Mammary epithelial cell (primary cell): ENCODE measurements at regions of chr21 and their contacts with region 1.

Region 1: GRCh38 chr21:34807146-34807880 is 138.5 kb downstream of the CLIC6 start:
- DNase-seq: peak; percentile 97
- H3K4me3 ChIP-seq: no peak overlapping the region
- H3K27ac ChIP-seq: peak overlapping the region; percentile 100
- H3K4me1 ChIP-seq: peaks cover 78% of the 10 kb centered on the region
- H3K27me3 ChIP-seq: no peaks in the 10 kb centered on the region
- CTCF ChIP-seq: peak in 1 of 2 donors; percentile 21

Region 2: DNA sequence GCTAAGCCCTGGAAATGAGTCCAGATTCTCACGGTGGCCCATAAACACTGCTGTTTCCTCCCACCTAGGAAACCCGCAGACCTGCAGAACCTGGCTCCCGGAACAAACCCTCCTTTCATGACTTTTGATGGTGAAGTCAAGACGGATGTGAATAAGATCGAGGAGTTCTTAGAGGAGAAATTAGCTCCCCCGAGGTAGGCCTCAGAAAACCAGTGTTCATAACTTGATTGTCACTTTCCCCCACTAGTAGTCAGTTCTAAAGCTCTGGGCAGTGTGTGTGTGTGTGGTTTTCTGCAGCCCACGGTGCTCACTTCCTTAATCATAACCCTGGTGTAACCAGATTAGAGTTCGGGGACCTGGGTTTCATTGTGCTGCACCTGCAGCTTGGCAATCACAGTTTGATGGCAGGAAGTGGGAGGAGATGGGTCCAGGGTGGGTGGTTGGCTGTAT is 99.4 kb before region 1 on chr21:
- CTCF ChIA-PET with region 1: no interaction called
- dilution Hi-C with region 1: loop called (anchors 5 kb)
- in situ Hi-C with region 1: no loop called
- intact Hi-C with region 1: no loop called
- DNase-seq: no peak
- H3K4me3 ChIP-seq: no peak overlapping the region
- H3K27ac ChIP-seq: no peak overlapping the region
- H3K4me1 ChIP-seq: peaks cover 11% of the 10 kb centered on the region
- H3K27me3 ChIP-seq: no peaks in the 10 kb centered on the region
- CTCF ChIP-seq: no peak

Region 3: DNA sequence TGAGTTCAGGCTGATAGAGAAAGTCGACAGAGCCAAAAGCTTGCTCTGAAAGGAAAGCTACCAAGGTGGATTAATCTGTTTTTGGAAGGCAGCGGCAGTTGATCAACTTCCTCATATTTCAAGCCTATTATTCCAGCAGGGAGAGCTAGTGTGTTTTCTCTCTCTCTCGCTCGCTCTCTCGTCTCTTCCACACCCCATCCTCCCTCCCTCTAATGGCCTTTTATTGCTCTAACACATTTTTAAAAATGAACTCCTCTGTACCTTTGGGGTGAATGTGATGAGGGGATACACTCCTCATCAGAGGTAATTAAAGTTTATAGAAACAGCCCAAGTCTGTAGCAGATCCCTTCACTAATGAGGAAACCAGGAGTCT is 12.2 kb before region 1 on chr21:
- CTCF ChIA-PET with region 1: no interaction called
- dilution Hi-C with region 1: no loop called
- in situ Hi-C with region 1: no loop called
- intact Hi-C with region 1: loop called (anchors 1 kb)
- DNase-seq: no peak
- H3K4me3 ChIP-seq: no peak overlapping the region
- H3K27ac ChIP-seq: peak overlapping the region; percentile 83
- H3K4me1 ChIP-seq: peaks cover 54% of the 10 kb centered on the region
- H3K27me3 ChIP-seq: no peaks in the 10 kb centered on the region
- CTCF ChIP-seq: peak in 1 of 2 donors; percentile 22

Region 4: DNA sequence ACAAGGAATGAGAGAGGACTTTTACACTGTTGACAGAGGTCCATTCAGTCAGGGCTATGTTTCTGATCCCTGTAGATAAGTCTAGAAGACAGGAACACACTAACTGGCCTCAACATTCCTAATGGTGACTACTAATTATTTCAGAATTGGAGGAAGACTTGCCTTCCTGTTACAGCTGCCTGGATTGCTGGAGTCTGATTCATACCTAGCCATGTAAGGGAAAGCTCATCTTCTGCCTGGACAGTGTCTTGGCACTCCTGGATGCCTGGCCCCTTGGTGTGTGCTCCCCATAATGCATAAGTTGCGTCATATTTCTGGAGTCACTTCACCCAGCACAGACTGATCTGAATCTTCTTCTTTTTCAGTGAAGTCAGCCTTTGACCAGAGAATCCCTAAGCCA is 567.8 kb after region 1 on chr21:
- CTCF ChIA-PET with region 1: no interaction called
- dilution Hi-C with region 1: no loop called
- in situ Hi-C with region 1: no loop called
- intact Hi-C with region 1: loop called (anchors 10 kb)
- DNase-seq: peak; percentile 77
- H3K4me3 ChIP-seq: no peak overlapping the region
- H3K27ac ChIP-seq: peak overlapping the region; percentile 42
- H3K4me1 ChIP-seq: peaks cover 37% of the 10 kb centered on the region
- H3K27me3 ChIP-seq: no peaks in the 10 kb centered on the region
- CTCF ChIP-seq: no peak